Activated naive CD4-positive, alpha-beta T cell treated with anti-CD3 and anti-CD28 coated beads for 36 hours (primary cell): ENCODE measurements at regions of chr19 and their contacts with region 1.

Region 1: DNA sequence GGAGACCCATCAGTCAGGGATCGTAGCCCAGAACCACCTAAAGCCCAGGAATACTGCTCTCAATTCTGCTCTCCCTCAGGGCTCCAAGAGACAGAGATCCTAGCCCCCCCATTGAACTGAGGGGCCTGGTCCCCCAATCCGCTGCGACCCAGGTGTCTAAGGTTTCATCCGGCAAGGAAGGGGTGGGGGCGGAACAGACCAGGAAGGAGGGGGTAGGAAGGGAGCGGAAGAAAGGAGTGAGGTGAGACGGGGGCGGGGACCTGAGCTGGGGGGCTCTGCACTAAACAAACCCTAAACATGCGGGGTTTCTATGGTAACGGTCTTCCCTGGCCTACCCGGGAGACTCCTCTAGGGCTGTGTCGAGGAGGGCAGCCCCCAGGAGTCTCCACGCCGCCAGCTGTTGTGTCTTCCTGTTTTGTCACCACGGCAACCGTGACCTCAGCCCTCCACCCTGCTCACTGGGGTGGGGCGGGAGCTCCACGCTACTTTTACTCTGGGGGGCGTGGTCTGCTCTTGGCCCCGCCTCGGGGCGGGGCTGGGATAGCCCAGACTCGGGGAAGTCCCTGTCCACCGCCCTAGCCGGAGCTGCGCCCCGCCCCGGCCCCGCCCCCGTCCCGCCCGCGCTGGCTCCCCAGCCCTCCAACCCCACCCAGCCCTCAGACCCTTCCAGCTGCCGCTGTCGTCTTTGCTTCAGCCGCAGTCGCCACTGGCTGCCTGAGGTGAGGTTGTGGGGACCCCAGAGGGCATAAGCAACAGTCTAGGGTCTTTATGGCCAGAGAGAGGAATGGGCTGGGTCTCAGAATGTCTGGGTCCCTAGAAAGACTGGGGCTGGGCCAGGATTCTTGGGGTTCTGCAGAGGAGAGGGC is at the start of gene MYADM:
- DNase-seq: peak; percentile 99
- H3K4me3 Mint-ChIP-seq: peak within 1 kb of the TSS; percentile 88
- H3K27ac Mint-ChIP-seq: peak within 1 kb of the TSS; percentile 82
- H3K4me1 Mint-ChIP-seq: peaks cover 36% of the 10 kb centered on the region
- H3K27me3 Mint-ChIP-seq: no peaks in the 10 kb centered on the region
- total RNA-seq, gene MYADM: 13.6 to 13.9 TPM

Region 2: DNA sequence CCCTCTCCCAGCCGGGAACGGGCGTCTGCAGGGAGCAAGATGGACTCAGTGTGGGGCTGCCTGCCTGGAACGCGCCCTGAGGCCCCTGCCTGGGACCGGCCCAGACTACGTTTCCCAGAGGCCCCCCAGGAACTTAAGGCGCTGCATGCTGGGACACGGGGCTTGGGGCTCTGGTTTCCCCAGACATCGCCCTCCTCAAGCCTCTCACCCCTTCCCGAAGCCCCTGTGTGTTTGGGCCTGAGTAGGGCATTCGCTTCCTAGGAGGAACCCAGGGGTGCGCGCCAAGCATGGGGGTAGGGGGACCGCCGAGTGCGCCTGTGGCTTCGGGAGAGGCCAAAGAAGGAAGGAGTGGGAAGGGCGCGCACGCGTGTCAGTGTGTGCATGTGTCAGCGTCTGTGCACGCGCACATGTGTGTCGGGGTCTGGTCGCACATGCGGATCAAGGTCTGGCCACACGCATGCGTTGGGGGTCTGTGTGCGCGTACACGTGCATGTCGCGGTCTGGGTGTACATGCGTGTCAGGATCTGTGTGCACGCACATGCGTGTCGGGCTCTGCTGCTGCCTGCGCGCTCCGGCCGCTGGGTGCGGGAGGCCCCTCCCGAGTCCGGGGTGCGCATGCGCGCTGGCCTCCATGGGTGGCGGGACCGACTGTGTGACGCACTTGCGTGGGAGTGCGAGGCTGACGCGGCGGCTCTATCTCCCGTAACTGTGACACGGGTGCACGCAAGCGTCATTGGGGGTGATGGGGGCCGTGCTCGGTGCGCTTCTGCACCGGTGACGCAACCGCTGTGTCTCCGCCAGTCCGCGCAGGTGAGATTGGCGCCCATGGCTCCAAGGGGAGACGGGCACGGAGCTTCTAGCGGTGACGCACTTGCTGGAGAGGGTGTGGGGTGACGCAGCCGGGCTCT is 313.3 kb before region 1 on chr19:
- CTCF ChIA-PET with region 1: no interaction called
- intact Hi-C with region 1: loop called (anchors 10 kb)
- DNase-seq: peak; percentile 94
- H3K4me3 Mint-ChIP-seq: peak overlapping the region; percentile 94
- H3K27ac Mint-ChIP-seq: peak overlapping the region; percentile 99
- H3K4me1 Mint-ChIP-seq: peaks cover 31% of the 10 kb centered on the region
- H3K27me3 Mint-ChIP-seq: no peaks in the 10 kb centered on the region

Region 3: DNA sequence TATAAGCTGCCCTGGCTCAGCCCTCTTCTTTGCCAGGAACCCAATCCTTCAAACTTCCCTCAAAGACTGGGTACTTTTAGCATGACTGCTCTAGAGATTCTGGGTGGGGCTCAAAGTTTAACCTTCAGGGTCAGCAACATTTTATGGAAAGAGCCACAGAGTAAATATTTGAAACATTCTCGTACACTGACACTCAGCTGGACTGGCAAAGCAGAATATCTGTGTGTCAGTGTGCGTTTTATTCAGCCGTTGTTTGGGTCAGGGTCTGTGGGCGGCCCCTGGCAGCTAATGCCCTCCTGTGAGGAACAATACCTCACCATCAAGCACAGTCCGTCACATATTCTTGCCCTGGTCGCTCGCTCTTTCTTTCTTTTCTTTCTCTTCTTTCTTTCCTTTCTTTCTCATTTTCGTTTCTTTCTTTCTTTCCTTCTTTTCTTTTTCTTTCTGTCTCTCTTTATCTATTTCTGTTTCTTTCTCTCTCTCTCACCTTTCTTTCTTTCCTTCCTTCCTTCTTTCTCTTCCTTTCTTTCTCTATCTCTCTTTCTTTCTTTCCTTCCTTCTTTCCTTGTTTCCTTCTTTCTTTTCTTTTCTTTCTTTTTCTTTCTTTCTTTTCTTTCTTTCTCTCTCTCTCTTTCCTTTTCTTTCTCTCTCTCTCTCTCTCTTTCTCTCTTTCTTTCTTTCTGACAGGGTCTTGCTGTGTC is 224.9 kb before region 1 on chr19:
- CTCF ChIA-PET with region 1: no interaction called
- intact Hi-C with region 1: no loop called
- DNase-seq: no peak
- H3K4me3 Mint-ChIP-seq: no peak overlapping the region
- H3K27ac Mint-ChIP-seq: no peak overlapping the region
- H3K4me1 Mint-ChIP-seq: no peaks in the 10 kb centered on the region
- H3K27me3 Mint-ChIP-seq: no peaks in the 10 kb centered on the region

Region 4: DNA sequence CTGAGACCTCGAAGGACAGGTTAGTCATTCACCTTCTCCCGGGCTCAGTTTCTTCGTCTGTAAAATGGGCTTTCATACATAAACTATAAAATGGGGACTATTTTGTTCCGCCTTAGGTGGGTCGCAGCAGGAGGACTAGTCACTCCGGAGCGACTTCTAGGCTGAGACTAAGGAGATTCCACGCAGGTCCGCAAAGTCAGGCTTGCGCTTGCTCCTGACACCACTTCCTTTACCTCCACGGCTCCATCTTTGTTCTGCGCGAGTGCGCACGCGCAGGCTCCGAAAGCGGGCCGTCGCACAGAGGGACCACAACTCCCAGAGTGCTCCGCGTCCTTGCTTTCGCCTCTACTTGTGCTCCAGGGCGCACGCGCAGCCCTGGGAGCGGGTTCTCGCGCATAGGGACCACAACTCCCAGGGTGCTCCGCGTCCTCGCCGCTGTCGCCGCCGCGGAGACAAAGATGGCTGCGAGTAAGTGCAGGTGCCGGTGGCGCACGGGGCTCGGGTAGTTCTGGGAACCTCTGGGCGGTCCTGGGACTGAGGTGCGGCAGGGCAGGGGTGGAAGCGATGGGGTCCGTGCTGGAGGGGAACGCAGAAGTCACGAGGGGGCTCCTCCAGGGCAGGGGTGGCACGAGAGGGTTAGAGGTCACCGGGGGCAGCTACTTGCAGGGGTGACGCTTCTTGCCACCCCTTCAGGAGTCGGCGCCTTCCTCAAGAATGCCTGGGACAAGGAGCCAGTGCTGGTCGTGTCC is 235.1 kb after region 1 on chr19 and contains the start of gene NDUFA3:
- CTCF ChIA-PET with region 1: no interaction called
- intact Hi-C with region 1: loop called (anchors 5 kb)
- DNase-seq: peak; percentile 98
- H3K4me3 Mint-ChIP-seq: peak within 1 kb of the TSS; percentile 99
- H3K27ac Mint-ChIP-seq: peak within 1 kb of the TSS; percentile 92
- H3K4me1 Mint-ChIP-seq: peaks cover 28% of the 10 kb centered on the region
- H3K27me3 Mint-ChIP-seq: no peaks in the 10 kb centered on the region
- total RNA-seq, gene NDUFA3: 110 to 120 TPM

Region 5: GRCh38 chr19:54189735-54190502 is 322.5 kb after region 1 on chr19:
- CTCF ChIA-PET with region 1: no interaction called
- intact Hi-C with region 1: loop called (anchors 2 kb)
- DNase-seq: peak; percentile 100
- H3K4me3 Mint-ChIP-seq: peak overlapping the region; percentile 82
- H3K27ac Mint-ChIP-seq: peak overlapping the region; percentile 96
- H3K4me1 Mint-ChIP-seq: peaks cover 31% of the 10 kb centered on the region
- H3K27me3 Mint-ChIP-seq: no peaks in the 10 kb centered on the region

Region 6: DNA sequence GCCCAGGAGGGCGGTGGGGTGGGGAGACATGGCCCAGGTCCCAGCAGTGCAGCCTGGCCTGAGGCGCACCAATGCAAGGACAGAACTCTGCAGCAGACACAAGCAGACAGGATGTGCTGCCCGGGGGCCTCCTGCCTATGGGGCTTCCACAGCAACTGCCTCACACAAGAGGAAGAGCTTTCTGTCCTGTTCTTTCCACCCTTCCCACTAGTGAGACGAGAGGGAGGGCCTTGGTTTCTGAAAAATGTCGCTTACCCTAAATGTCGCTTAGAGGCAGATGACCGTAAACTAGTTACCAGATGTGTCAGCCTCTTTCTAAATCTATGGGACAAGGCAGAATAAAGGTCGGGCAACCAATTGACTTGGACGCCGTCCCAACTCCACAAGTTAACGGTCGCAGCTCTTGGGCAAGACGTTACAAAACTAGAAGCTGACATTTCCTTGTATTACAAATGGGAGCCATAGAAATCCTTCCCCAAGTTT is 497.4 kb after region 1 on chr19 and contains the start of gene LAIR1:
- CTCF ChIA-PET with region 1: no interaction called
- intact Hi-C with region 1: loop called (anchors 5 kb)
- DNase-seq: peak; percentile 79
- H3K4me3 Mint-ChIP-seq: peak within 1 kb of the TSS; percentile 89
- H3K27ac Mint-ChIP-seq: peak within 1 kb of the TSS; percentile 91
- H3K4me1 Mint-ChIP-seq: peaks cover 67% of the 10 kb centered on the region
- H3K27me3 Mint-ChIP-seq: peaks cover 8% of the 10 kb centered on the region
- total RNA-seq, gene LAIR1: 5.2 to 5.7 TPM